ENCODE measurements at regions of chr11 and their contacts with region 1.

Region 1: DNA sequence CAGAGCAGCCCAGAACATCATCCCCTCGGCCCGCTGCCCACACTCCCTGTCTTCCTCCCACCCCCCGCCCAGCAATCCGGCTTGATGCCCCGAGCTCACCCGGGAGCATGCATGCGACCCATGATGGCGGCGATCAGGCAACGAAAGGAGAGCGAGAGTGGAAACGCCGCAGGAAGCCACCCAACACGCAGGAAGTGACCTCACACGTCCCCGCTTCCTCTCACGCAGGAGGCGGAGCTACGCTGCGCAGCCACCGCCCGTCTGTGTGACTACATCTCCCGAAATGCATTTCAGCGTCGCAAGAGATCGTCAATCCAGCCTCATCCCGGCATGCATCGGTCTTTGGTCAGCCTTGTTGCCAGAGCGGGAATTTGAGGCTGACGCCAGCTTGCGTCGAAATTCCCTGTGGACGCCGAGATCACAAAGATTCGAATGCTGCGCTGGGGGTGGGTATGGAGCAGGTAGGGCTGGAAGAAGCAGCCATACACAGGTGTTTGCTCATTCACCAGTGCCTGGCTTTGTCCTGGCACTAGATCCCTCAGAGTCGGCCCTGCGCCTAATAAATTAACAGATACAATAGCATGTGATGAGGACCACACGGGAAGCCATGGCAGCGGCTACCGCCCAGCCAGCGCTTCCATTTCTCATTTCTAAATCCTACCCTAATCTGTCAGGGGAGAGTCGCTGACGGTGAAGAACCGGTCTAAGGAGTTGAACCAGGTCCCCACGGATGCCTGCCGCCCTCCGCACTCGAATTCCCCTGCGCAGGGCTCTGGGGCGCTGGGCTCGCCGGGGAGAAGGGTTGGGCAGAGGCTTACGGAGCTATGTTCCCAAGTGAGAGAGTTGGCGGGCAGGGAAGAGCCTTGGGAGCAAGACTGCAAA is at the start of gene RPS13:
- DNase-seq: peak; percentile 82 to 96 (median 93)
- ATAC-seq: peak; percentile 91 to 95
- H3K4me3 Mint-ChIP-seq: peak within 1 kb of the TSS; percentile 97 to 99 (median 98)
- H3K27ac Mint-ChIP-seq: peak within 1 kb of the TSS; percentile 90 to 99 (median 98)
- H3K4me1 Mint-ChIP-seq: peaks cover 23 to 44% (median 40%) of the 10 kb centered on the region in 4 donors
- H3K27me3 Mint-ChIP-seq: no peaks in the 10 kb centered on the region
- polyA plus RNA-seq, gene RPS13: 2,659 to 3,144 (median 3,037) TPM

Region 2: DNA sequence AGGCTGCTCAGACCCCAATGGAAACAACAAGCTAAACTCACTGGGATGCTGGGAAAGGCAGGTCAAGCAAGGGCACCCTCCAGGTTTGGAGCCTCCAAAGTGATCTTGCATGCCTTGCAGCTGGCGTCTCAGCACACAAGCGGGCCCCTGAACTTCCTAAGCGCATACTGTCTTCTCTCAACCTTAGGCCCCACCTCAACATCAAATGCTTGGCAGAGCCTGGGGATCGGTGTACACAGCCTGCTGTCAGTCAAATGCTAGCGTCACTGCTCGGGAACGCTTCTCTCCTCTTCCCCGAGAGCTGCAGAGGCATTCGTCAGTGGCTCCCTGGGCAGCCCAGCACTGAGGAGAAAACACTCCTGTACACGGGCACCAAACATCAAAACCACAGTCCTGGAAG is 214.4 kb before region 1 on chr11:
- POLR2A ChIA-PET with region 1: no interaction called
- DNase-seq: no peak
- ATAC-seq: no peak
- H3K4me3 Mint-ChIP-seq: no peak overlapping the region
- H3K27ac Mint-ChIP-seq: no peak overlapping the region
- H3K4me1 Mint-ChIP-seq: no peaks in the 10 kb centered on the region
- H3K27me3 Mint-ChIP-seq: peaks cover 0 to 8% (median 3%) of the 10 kb centered on the region in 5 donors

Region 3: DNA sequence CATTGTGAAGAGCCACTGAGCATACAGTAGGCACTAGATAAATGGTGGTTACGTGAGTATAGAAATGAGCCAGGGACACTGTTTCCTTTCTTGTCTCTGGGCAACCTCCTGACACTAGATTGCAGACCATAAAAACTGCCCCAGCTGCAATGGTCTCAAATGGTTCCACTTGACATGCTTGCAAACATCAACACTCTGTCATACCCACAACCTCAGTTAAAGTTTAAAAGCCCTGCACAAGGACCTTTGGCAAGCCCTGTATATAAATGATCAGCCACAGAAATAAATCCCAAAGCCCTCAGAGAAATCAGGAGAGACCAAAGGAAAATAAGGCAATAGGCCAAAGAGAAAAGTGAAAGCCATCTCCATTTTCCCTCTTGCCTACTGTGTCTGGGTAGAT is 84.3 kb before region 1 on chr11:
- POLR2A ChIA-PET with region 1: no interaction called
- DNase-seq: no peak
- ATAC-seq: no peak
- H3K4me3 Mint-ChIP-seq: no peak overlapping the region
- H3K27ac Mint-ChIP-seq: no peak overlapping the region
- H3K4me1 Mint-ChIP-seq: peaks cover 0 to 3% (median 0%) of the 10 kb centered on the region in 4 donors
- H3K27me3 Mint-ChIP-seq: no peaks in the 10 kb centered on the region

Region 4: DNA sequence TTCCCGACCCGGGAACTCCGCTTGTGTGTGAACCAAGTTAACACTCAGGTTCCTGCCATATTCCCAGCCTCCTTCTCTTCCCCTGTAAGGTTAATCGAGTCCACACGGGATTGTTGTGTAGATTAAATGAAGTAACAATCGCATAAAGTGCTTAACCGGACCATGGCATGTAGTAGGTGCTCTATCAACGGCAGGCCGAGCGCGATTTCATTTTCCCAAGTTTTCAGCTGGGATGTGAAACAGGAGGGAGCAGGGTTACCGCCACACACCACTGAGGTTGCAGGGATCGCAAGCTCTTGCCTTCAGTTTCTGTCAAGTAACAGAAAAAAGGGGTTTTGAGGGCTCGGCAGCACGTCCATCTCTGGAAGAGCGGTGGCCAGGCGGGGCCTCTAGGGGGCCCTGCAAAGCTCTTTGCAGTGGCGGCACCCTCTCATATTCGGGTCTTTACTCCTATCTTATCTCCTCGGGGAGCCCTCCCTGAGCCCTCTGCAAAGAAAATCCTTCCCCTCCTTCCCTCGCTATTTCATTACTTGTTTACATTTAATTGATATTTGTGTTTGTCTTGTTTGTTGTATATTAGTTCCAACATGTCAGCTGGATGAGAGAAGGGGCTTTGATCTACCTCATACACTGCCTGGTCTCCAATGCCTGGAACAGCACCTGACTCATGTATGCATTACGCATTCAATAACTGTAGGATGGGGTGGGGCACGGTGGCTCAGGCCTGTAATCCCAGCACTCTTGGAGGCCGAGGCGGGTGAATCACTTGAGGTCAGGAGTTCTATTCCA is 62.7 kb before region 1 on chr11:
- POLR2A ChIA-PET with region 1: no interaction called
- DNase-seq: peak in 3 of 10 donors; percentile 1 to 9 (median 6)
- ATAC-seq: peak; percentile 64
- H3K4me3 Mint-ChIP-seq: peak overlapping the region; percentile 84 to 95 (median 92)
- H3K27ac Mint-ChIP-seq: peak overlapping the region in 5 of 10 donors; percentile 16 to 61 (median 39)
- H3K4me1 Mint-ChIP-seq: peaks cover 6 to 13% (median 9%) of the 10 kb centered on the region in 4 donors
- H3K27me3 Mint-ChIP-seq: peaks cover 13 to 22% (median 19%) of the 10 kb centered on the region in 5 donors

Region 5: DNA sequence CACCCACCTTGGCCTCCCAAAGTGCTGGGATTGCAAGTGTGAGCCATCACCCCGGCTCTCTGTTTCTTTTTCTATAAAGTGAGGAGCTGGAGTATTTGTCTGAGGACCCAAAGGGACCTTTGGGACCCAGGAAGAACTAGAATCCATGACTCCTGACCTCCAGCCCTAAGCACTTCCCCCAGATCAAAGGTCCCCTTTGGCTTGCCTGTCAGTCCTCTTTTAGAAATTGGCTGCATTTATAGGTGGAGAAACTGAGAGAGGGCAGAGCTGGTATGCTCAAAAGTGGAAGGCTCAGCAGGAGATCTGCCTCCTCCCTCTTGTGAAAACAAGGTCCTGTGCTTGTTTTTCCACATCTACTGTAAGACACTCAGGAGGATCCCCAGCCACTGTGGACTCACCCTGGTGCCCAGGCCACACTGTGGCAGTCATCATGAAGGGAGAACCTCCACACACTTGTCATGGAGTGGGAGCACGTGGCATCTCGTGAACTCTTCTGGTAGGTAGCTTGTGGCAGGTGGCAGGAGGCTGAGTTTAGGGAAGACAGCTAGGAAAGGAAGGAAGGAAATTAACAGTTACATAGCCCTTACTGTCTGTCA is 51.2 kb before region 1 on chr11:
- POLR2A ChIA-PET with region 1: no interaction called
- DNase-seq: no peak
- ATAC-seq: no peak
- H3K4me3 Mint-ChIP-seq: no peak overlapping the region
- H3K27ac Mint-ChIP-seq: no peak overlapping the region
- H3K4me1 Mint-ChIP-seq: peaks cover 0 to 2% (median 0%) of the 10 kb centered on the region in 4 donors
- H3K27me3 Mint-ChIP-seq: peaks cover 0 to 2% (median 0%) of the 10 kb centered on the region in 5 donors

Region 6: DNA sequence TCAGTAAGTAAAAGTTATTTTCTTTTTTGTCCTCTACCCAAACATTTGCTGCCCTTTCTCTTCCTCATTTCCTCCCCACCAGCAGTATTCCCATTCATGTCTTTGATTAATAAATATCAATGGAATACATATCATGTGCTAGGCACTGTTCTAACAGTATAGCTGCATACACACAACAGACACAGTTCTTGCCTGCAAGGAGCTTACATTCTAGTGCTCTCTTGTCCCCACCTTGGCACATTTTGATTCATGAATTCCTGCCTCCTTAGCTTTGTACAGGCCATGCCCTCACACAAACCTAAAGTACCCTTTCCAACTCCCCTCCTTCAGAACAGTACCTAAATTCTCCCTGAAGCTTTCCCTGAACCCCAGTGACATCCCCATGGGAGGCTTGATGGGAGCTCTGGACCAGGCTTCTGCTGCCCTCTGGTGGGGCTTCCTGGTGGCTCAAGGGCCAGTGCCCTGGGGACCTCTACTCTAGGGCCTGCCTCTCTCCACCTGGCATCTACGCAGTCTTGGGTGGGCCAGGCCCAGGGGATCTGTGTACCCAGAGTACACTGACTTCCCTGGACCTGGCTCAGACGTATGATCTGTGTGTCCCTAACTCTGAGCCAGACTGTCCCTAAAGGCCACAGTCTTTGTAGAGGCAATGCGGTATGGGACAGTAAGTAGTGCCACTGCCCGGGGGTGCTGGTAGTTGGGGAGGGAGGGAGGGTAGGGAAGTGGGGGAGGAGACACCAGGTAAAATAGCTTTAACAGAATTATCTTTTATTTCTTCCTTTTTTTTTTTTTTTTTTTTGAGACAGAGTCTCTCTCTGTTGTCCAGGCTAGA is 14.4 kb before region 1 on chr11:
- POLR2A ChIA-PET with region 1: interaction called, 10 read pairs
- DNase-seq: no peak
- ATAC-seq: no peak
- H3K4me3 Mint-ChIP-seq: no peak overlapping the region
- H3K27ac Mint-ChIP-seq: peak overlapping the region in 1 of 10 donors; percentile 60
- H3K4me1 Mint-ChIP-seq: no peaks in the 10 kb centered on the region
- H3K27me3 Mint-ChIP-seq: peaks cover 0 to 2% (median 0%) of the 10 kb centered on the region in 5 donors

Region 7: DNA sequence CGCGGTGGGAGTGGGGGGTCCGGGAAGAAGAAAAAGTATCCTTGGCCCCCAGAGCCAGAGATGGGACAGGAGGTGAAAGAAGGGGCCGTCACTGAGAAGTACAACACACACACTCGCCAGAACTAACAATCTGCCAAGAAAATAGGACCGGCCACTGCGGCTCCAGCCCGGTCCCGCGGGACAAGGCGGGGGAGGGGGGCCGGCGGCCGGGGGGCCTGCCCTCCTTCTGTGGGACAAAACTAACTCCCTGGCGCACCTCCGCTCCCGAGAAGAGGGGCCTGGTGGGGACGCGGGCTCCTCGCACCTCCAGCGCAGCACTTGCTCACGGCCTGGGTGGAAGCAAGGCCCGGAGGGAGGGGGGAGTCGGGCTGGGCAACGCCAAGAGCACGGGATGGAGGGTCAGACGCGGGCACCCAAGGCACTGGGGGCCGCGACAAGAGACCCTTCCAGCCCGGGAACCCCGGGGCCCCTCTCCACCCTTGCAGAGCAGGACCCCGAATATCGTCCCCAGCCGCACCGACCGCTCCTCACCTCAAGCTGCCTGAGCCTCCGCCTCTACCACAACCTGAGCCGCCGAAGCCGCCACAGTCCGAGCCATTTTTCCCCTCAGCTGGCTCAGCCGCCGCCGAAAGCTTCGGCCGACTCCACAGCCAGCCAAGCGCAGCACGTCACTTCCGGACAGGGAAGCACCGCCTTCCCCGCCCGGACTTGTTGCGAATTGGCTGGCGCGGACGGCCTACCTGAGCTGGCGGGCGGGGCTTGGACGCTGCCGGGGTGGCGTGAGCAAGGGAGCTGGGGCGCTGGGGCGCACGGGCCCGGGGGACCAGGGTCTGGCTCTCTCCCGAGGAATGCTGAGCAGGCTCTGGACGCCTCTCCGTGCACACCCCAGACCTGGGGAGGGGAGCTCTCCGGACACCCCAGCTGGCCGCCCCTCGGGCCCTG is 129.8 kb after region 1 on chr11 and contains the start of gene PIK3C2A:
- POLR2A ChIA-PET with region 1: interaction called, 14 read pairs
- DNase-seq: peak; percentile 85 to 96 (median 92)
- ATAC-seq: peak; percentile 95 to 96
- H3K4me3 Mint-ChIP-seq: peak within 1 kb of the TSS; percentile 89 to 100 (median 98)
- H3K27ac Mint-ChIP-seq: peak within 1 kb of the TSS; percentile 94 to 99 (median 99)
- H3K4me1 Mint-ChIP-seq: peaks cover 23 to 58% (median 45%) of the 10 kb centered on the region in 4 donors
- H3K27me3 Mint-ChIP-seq: no peaks in the 10 kb centered on the region
- polyA plus RNA-seq, gene PIK3C2A: 7.0 to 9.8 (median 8.3) TPM

Measured in naive thymus-derived CD8-positive, alpha-beta T cell (primary cell).